ENCODE measurements at regions of chr3 and their contacts with region 1.

Region 1: DNA sequence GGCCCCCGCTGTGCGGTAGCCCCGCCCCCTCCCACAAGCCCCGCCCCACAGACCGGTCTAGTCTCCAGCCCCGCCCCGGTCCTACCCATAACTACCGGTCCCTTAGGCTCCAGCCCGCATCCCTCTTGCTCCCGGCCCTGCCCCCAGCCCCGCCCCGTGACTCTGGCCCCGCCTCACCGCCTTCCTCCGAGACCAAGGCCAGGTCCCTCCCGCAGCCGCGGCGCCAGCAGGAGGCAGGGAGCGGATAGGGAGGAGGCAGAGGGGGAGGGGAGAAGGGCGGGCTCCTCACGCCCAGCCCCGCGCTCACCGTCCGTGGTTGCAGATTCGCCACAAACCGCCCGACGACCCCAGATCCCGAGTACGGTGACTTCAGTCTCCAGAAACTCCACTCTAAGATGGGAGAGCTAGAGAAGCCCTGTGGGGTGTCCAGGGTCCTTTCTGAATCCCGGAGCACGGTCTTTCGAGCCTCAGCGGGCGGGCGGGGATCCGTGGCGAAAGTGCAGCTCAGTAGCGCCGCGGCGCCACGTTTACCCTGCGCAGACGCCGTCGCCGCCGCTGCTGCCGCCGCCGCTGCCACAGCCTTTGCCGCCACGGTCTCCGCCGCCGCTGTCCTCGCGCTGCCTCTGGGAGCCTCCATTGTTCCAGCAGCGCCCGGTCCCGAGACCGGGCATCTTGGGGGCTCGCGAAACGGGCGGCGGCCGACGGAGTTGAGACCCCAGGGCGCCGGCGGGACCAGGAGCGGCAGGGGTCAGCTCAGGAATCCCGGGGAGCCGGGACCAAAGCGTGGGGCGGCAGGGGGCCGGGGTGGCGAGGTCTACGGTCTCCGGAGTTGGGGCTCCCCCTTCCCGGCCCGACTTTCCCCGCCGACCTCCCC is at the start of gene BRPF1:
- DNase-seq: peak; percentile 99
- H3K4me3 ChIP-seq: peak within 1 kb of the TSS; percentile 75 to 90 (median 86)
- H3K27ac ChIP-seq: peak within 1 kb of the TSS; percentile 100
- H3K4me1 ChIP-seq: peaks cover 16% of the 10 kb centered on the region
- H3K27me3 ChIP-seq: peaks cover 0 to under 1% of the 10 kb centered on the region in 2 experiments
- CTCF ChIP-seq: no peak
- POLR2A ChIP-seq: no peak
- total RNA-seq, gene BRPF1: 23.2 and 26.2 TPM in 2 replicates

Region 2: DNA sequence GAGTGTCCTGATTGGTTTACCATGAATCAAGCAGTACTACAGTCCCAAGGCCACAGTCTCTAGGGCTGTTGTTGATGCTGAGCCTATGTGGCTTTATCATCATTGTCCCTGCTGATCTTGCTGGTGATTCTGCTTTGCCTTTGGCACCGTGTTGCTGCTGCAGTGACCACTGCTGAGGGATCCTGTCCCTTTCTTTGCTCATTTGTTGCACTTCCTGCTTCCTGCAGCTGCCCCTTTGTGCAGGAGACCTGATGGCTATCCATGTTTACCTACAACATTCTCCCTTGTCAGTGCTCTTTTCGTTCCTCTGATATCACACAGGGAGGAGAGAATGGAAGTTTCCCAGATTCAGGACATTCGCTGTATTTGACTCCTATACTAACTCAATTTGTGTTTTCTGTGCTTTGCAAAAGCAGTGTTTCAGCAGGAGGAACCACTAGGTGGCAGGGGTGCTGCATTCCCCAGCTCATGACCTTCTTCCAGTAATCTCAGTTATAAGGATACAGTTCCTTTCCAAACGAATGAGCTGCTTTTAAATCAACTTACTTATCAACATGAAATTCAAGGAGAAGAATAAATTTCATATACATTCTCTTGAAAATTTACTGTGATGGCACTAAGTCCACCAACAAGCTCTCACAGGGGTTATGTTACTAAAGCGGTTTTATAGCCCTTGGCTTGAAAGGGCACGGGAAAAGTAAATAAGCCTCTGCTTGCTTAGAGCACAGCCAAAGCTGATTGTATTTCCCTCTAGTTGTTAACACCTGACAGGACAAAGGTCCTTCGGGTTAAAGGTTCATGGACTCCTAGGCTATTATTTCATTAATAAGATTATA is 378.3 kb before region 1 on chr3:
- CTCF ChIA-PET with region 1: interaction called, 3 read pairs
- POLR2A ChIA-PET with region 1: no interaction called
- dilution Hi-C with region 1: no loop called
- intact Hi-C with region 1: loop called (anchors 5 kb)
- DNase-seq: peak; percentile 81
- H3K4me3 ChIP-seq: no peak overlapping the region
- H3K27ac ChIP-seq: no peak overlapping the region
- H3K4me1 ChIP-seq: peaks cover 11% of the 10 kb centered on the region
- H3K27me3 ChIP-seq: no peaks in the 10 kb centered on the region
- CTCF ChIP-seq: peak; percentile 86 to 92
- POLR2A ChIP-seq: no peak

Region 3: GRCh38 chr3:9503283-9503682 is 228.2 kb before region 1 on chr3:
- CTCF ChIA-PET with region 1: no interaction called
- POLR2A ChIA-PET with region 1: no interaction called
- dilution Hi-C with region 1: no loop called
- intact Hi-C with region 1: loop called (anchors 1 kb)
- DNase-seq: peak; percentile 72
- H3K4me3 ChIP-seq: no peak overlapping the region
- H3K27ac ChIP-seq: no peak overlapping the region
- H3K4me1 ChIP-seq: peaks cover 3% of the 10 kb centered on the region
- H3K27me3 ChIP-seq: peaks cover 10 to 15% of the 10 kb centered on the region in 2 experiments
- CTCF ChIP-seq: peak; percentile 88 to 95
- POLR2A ChIP-seq: no peak

Region 4: GRCh38 chr3:9704347-9705322 is 26.8 kb before region 1 on chr3:
- CTCF ChIA-PET with region 1: no interaction called
- POLR2A ChIA-PET with region 1: no interaction called
- dilution Hi-C with region 1: no loop called
- intact Hi-C with region 1: loop called (anchors 1 kb)
- DNase-seq: peak; percentile 28
- H3K4me3 ChIP-seq: no peak overlapping the region
- H3K27ac ChIP-seq: no peak overlapping the region
- H3K4me1 ChIP-seq: peaks cover 7% of the 10 kb centered on the region
- H3K27me3 ChIP-seq: peaks cover 1 to 8% of the 10 kb centered on the region in 2 experiments
- CTCF ChIP-seq: no peak
- POLR2A ChIP-seq: no peak

Region 5: DNA sequence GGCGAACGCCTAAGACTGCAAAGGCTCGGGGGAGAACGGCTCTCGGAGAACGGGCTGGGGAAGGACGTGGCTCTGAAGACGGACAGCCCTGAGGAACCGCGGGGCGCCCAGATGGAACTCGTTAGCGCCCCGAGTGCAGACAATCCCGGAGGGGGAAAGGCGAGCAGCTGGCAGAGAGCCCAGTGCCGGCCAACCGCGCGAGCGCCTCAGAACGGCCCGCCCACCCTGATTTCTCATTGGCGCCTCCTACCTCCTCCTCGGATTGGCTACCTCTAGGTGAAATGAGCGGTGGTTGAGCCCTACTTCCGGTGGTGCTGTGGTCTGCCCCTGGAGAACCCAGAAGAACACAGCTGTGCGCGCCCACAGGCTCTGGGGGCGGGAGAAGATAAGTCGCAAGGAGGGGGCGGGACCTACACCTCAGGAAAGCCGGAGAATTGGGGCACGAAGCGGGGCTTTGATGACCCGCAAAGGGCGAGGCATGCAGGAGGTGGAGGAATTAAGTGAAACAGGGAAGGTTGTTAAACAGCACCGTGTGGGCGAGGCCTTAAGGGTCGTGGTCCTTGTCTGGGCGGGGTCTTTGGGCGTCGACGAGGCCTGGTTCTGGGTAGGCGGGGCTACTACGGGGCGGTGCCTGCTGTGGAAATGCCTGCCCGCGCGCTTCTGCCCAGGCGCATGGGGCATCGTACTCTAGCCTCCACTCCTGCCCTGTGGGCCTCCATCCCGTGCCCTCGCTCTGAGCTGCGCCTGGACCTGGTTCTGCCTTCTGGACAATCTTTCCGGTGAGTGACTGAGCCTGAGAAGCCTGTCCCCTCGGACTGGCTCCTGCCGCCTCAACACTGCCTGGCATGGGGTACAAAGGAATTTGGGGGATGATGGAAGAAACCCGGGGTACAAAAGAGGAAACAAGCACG is 18.5 kb after region 1 on chr3 and contains the start of gene OGG1:
- CTCF ChIA-PET with region 1: interaction called, 12 read pairs
- POLR2A ChIA-PET with region 1: interaction called, 7 read pairs
- dilution Hi-C with region 1: no loop called
- intact Hi-C with region 1: loop called (anchors 1 kb)
- DNase-seq: peak; percentile 98
- H3K4me3 ChIP-seq: peak within 1 kb of the TSS; percentile 55 to 80 (median 58)
- H3K27ac ChIP-seq: peak within 1 kb of the TSS; percentile 46
- H3K4me1 ChIP-seq: peaks cover 39% of the 10 kb centered on the region
- H3K27me3 ChIP-seq: no peaks in the 10 kb centered on the region
- CTCF ChIP-seq: no peak
- POLR2A ChIP-seq: peak; percentile 85
- total RNA-seq, gene OGG1: 24.1 and 27.2 TPM in 2 replicates

Region 6: DNA sequence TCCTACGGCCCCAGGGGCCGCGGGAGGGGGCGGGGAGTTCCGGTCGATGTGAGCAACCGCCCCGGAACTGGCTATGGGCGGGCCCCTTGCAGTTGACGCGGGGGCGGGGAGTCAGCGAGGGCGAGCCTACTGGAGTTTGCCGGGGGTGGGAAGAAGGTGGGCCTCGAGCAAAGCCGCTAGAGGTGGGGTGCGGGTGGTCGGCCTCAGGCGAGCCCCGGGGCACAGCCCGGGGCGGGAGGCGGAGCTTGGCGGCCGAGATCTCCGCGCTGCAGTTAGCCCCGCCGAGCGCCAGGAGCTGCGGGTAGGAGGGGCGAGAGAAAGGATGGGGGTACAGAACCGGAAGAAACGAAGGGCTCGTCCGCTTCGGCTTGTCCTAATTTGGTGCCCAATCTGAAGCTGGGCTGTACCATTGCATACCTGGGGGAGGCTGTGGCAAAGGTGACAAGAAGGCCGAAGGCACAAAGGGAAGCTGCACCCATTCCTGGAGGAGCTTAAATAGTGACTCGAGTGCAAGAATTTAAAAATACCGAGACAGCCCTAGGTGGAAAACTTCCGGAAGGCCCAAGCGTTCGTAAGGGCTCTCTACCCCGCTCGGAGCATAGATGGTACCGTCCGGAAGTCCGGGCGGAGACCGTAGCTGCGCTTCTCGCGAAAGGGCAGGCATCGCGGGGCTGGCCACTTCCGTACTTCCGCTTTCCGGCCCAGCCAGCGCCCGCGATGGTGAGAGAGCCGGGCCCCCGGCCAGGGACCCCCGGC is 61.1 kb after region 1 on chr3 and contains the starts of genes ARPC4 and TADA3:
- CTCF ChIA-PET with region 1: interaction called, 4 read pairs
- POLR2A ChIA-PET with region 1: no interaction called
- dilution Hi-C with region 1: no loop called
- intact Hi-C with region 1: loop called (anchors 1 kb)
- DNase-seq: peak; percentile 95
- H3K4me3 ChIP-seq: peak within 1 kb of the TSS; percentile 68 to 88 (median 88)
- H3K27ac ChIP-seq: peak within 1 kb of the TSS; percentile 93
- H3K4me1 ChIP-seq: peaks cover 13% of the 10 kb centered on the region
- H3K27me3 ChIP-seq: no peaks in the 10 kb centered on the region
- CTCF ChIP-seq: peak in 1 of 2 donors; percentile 12
- POLR2A ChIP-seq: peak; percentile 88
- total RNA-seq, gene ARPC4: 197 TPM in 2 replicates
- total RNA-seq, gene TADA3: 31.0 and 31.3 TPM in 2 replicates

Measured in endothelial cell of umbilical vein (primary cell).